ENCODE measurements at regions of chr10 and their contacts with region 1.

Region 1: GRCh38 chr10:43689955-43690771 is 41.5 kb upstream of the ZNF32 start:
- DNase-seq: peak; percentile 79 to 91
- H3K4me3 ChIP-seq: peak overlapping the region; percentile 42
- H3K4me3 Mint-ChIP-seq: peak overlapping the region; percentile 76
- H3K27ac Mint-ChIP-seq: no peak overlapping the region
- H3K4me1 ChIP-seq: no peaks in the 10 kb centered on the region
- H3K4me1 Mint-ChIP-seq: no peaks in the 10 kb centered on the region
- H3K27me3 ChIP-seq: 0 out of 2 replicates have a peak, but pooled peaks cover 1% of the 10 kb centered on the region
- H3K27me3 Mint-ChIP-seq: peaks cover 40% of the 10 kb centered on the region
- CTCF ChIP-seq: peak; percentile 83 to 99

Region 2: DNA sequence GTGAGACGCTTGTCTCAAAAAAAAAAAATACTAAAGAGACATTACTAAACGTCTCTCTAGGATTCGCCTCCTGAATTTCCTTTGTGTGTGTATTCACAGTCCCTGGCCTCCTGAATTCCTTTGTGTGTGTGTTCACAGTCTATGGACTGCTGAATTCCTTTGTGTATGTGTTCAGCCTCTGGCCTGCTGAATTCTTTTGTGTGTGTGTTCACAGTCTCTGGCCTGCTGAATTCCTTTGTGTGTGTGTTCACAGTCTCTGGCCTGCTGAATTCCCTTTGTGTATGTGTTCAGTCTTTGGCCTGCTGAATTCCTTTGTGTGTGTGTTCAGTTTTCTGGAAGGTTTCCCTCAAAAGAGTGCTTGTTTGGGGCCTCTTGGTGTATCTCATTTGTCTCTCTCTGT is 899.3 kb before region 1 on chr10:
- CTCF ChIA-PET with region 1: no interaction called
- POLR2A ChIA-PET with region 1: no interaction called
- intact Hi-C with region 1: no loop called
- DNase-seq: no peak
- H3K4me3 ChIP-seq: no peak overlapping the region
- H3K4me3 Mint-ChIP-seq: no peak overlapping the region
- H3K27ac Mint-ChIP-seq: peak overlapping the region; percentile 15
- H3K4me1 ChIP-seq: no peaks in the 10 kb centered on the region
- H3K4me1 Mint-ChIP-seq: no peaks in the 10 kb centered on the region
- H3K27me3 ChIP-seq: no peaks in the 10 kb centered on the region
- H3K27me3 Mint-ChIP-seq: no peaks in the 10 kb centered on the region
- CTCF ChIP-seq: no peak

Region 3: DNA sequence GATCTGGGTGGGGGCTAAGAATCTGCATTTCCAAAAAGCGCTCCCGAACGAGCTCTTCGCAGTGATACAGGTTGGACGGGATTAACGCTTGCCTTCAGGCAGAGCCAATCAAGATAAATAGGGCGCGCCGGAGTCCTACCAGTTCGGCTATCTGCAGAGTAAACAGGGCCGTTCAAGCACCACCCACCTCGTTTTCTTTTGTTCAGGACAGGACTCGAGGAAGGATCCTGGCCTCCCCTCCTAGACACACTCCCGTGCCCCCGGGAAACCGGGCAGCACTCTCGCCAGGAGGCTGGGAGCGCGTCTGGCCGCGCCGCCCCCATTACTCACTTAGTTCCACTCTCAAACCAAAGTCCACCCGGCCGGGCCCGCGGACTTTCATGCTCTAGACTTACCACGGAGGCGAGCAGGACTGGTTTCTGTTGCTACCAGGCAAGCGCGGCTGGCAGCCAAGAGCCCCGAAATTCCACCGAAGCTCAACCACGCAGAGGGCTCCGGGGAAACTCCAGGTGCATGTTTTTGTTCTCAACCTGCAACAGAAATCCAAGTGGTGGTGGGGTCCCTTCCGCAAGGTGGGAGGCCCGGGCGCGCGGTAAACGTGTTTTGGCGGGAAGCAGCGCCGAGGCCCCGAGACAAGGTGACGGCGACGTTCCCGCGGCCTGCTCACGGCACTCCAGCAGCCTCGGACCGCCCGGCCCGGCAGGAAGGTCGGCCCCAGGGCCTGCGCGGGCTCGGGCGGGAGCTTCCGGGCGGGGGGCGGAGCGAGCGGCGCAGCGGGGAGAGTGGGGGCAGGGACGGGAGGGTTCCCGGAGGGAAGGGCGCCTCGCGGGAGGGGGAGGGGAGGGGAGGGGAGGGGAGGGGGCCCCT is 293.9 kb before region 1 on chr10:
- CTCF ChIA-PET with region 1: no interaction called
- POLR2A ChIA-PET with region 1: no interaction called
- intact Hi-C with region 1: no loop called
- DNase-seq: peak; percentile 94
- H3K4me3 ChIP-seq: peak overlapping the region; percentile 62
- H3K4me3 Mint-ChIP-seq: peak overlapping the region; percentile 81
- H3K27ac Mint-ChIP-seq: peak overlapping the region; percentile 94
- H3K4me1 ChIP-seq: peaks cover 58% of the 10 kb centered on the region
- H3K4me1 Mint-ChIP-seq: peaks cover 33% of the 10 kb centered on the region
- H3K27me3 ChIP-seq: no peaks in the 10 kb centered on the region
- H3K27me3 Mint-ChIP-seq: no peaks in the 10 kb centered on the region
- CTCF ChIP-seq: no peak

Region 4: GRCh38 chr10:43735907-43736306 is 45.7 kb after region 1 on chr10:
- CTCF ChIA-PET with region 1: interaction called, 13 read pairs
- POLR2A ChIA-PET with region 1: no interaction called
- intact Hi-C with region 1: no loop called
- DNase-seq: no peak
- H3K4me3 ChIP-seq: no peak overlapping the region
- H3K4me3 Mint-ChIP-seq: no peak overlapping the region
- H3K27ac Mint-ChIP-seq: no peak overlapping the region
- H3K4me1 ChIP-seq: no peaks in the 10 kb centered on the region
- H3K4me1 Mint-ChIP-seq: no peaks in the 10 kb centered on the region
- H3K27me3 ChIP-seq: no peaks in the 10 kb centered on the region; the same call in 1 of the 2 replicates
- H3K27me3 Mint-ChIP-seq: peaks cover 27% of the 10 kb centered on the region
- CTCF ChIP-seq: no peak

Region 5: DNA sequence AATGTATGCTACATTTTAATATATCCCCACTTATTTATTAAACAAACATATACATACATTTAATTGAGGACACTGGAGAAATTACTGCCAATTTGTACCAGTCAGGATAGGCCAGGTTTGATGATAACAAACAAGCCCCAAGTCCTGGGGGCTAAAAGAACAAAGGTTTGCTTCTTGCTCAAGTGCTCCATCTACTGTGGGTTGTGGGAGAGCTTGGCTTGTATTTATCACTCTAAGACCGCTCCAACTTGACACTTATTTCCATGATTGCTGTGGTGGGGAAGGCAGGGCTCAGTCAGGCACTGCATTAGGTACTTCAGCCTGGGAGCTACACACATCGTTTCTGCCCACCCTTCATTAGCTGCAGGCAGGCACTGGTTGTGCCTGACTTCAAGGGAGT is 95.1 kb after region 1 on chr10:
- CTCF ChIA-PET with region 1: no interaction called
- POLR2A ChIA-PET with region 1: no interaction called
- intact Hi-C with region 1: loop called (anchors 1 kb)
- DNase-seq: peak in 1 of 2 experiments; percentile 20
- H3K4me3 ChIP-seq: no peak overlapping the region
- H3K4me3 Mint-ChIP-seq: no peak overlapping the region
- H3K27ac Mint-ChIP-seq: no peak overlapping the region
- H3K4me1 ChIP-seq: no peaks in the 10 kb centered on the region
- H3K4me1 Mint-ChIP-seq: no peaks in the 10 kb centered on the region
- H3K27me3 ChIP-seq: no peaks in the 10 kb centered on the region
- H3K27me3 Mint-ChIP-seq: peaks cover 20% of the 10 kb centered on the region
- CTCF ChIP-seq: peak; percentile 25 to 33

Region 6: DNA sequence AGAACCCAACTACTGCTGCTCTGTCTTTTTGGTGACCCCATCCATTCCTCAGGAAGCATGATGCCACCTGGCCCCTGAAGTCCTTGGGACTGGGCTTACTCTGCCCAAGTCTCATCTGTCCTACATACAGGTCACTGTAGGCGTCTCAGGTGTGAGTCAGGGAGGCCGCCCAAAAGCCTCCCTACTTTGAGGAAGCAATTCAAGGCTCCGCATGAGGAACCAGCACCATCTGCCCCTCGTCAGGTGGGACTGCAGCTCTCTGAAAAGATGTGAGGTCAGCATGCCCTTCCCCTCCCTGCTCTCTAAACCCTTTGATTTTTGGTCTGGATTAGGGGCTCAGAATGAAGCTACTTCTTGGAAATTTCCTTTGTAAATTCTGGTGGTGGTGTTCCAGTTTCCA is 340.0 kb after region 1 on chr10:
- CTCF ChIA-PET with region 1: no interaction called
- POLR2A ChIA-PET with region 1: no interaction called
- intact Hi-C with region 1: loop called (anchors 1 kb)
- DNase-seq: peak in 1 of 2 experiments; percentile 18
- H3K4me3 ChIP-seq: no peak overlapping the region
- H3K4me3 Mint-ChIP-seq: no peak overlapping the region
- H3K27ac Mint-ChIP-seq: no peak overlapping the region
- H3K4me1 ChIP-seq: no peaks in the 10 kb centered on the region
- H3K4me1 Mint-ChIP-seq: no peaks in the 10 kb centered on the region
- H3K27me3 ChIP-seq: no peaks in the 10 kb centered on the region
- H3K27me3 Mint-ChIP-seq: peaks cover 30% of the 10 kb centered on the region
- CTCF ChIP-seq: peak in 1 of 2 experiments; percentile 58

Measured in Caco-2 (cell line).